ENCODE measurements at regions of chr2 and their contacts with region 1.

Region 1: DNA sequence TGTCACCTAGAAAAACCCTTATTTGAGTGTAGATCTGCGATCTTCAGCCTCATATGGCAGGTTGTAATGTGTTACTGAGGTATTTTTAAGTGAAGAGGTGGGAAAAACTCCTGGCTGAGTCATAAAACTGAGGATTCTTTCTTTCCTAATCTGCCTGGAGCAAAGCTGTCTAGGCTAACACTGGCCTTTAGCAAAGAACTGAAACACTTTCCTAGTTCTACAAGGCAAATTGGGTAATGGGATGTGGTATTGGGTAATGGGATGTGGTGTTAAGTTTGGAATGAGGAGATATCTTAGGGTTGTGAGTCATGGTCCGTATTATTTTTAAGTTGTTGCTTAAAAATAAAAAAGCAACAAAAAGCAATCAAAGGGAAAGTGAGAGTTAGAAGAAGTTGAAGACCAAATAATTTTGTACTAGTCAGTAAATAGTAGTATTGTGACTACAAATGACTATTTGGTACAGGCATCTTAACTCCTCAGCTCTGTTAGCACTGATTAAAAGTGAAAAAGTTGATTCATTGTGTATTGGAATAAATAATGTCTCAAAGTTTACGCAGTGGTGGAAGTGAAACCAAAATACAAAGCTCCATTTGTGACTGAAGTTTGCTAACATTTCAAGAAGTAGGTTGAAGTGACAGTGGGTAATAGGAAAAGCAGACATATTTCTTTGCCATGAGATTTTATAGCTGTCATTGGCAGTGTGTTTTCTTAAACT is 216.8 kb downstream of the CAMKMT start:
- DNase-seq: peak; percentile 54
- ATAC-seq: peak; percentile 95
- H3K4me3 ChIP-seq: 0 out of 2 replicates have a peak overlapping the region, but pooled peaks have one; percentile 9
- H3K27ac ChIP-seq: peak overlapping the region; percentile 63
- H3K4me1 ChIP-seq: peaks cover 11% of the 10 kb centered on the region; the same call in 1 of the 2 replicates
- H3K27me3 ChIP-seq: no peaks in the 10 kb centered on the region
- CTCF ChIP-seq: no peak
- EP300 ChIP-seq: peak; percentile 49 to 56; a peak in 1 of 4 replicates
- POLR2A ChIP-seq: no peak
- RAD21 ChIP-seq: no peak

Region 2: DNA sequence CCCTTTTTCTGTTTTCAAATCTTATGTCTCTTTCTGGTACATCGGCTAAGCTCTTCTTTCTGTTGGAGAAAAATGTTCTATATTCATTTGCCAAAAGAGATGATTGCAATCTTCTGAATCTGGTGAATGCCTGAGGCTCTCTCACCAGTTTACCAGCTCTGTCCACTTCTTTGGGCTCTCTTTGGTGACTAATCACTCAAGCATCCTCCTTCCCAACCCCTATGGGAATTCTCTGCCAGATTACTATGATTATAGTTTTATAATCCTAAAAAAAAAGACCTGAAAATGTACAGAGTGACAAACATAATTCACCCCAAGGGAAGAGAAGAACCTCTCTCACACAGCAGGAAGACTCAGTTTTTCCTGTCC is 29.5 kb before region 1 on chr2:
- CTCF ChIA-PET with region 1: interaction called, 5 read pairs
- POLR2A ChIA-PET with region 1: no interaction called
- RAD21 ChIA-PET with region 1: interaction called, 4 read pairs
- SMC1A ChIA-PET with region 1: interaction called, 11 read pairs
- in situ Hi-C with region 1: no loop called
- intact Hi-C with region 1: no loop called
- DNase-seq: no peak
- ATAC-seq: no peak
- H3K4me3 ChIP-seq: no peak overlapping the region
- H3K27ac ChIP-seq: no peak overlapping the region
- H3K4me1 ChIP-seq: peaks cover 5% of the 10 kb centered on the region
- H3K27me3 ChIP-seq: no peaks in the 10 kb centered on the region
- CTCF ChIP-seq: no peak
- EP300 ChIP-seq: no peak
- POLR2A ChIP-seq: no peak
- RAD21 ChIP-seq: no peak

Region 3: GRCh38 chr2:44602446-44602845 is 23.9 kb after region 1 on chr2:
- CTCF ChIA-PET with region 1: interaction called, 8 read pairs
- POLR2A ChIA-PET with region 1: interaction called, 7 read pairs
- RAD21 ChIA-PET with region 1: interaction called, 41 read pairs
- SMC1A ChIA-PET with region 1: interaction called, 57 read pairs
- in situ Hi-C with region 1: no loop called
- intact Hi-C with region 1: no loop called
- DNase-seq: no peak
- ATAC-seq: no peak
- H3K4me3 ChIP-seq: no peak overlapping the region
- H3K27ac ChIP-seq: no peak overlapping the region
- H3K4me1 ChIP-seq: peaks cover 3% of the 10 kb centered on the region; the same call in 1 of the 2 replicates
- H3K27me3 ChIP-seq: no peaks in the 10 kb centered on the region
- CTCF ChIP-seq: no peak
- EP300 ChIP-seq: no peak
- POLR2A ChIP-seq: no peak
- RAD21 ChIP-seq: no peak

Region 4: DNA sequence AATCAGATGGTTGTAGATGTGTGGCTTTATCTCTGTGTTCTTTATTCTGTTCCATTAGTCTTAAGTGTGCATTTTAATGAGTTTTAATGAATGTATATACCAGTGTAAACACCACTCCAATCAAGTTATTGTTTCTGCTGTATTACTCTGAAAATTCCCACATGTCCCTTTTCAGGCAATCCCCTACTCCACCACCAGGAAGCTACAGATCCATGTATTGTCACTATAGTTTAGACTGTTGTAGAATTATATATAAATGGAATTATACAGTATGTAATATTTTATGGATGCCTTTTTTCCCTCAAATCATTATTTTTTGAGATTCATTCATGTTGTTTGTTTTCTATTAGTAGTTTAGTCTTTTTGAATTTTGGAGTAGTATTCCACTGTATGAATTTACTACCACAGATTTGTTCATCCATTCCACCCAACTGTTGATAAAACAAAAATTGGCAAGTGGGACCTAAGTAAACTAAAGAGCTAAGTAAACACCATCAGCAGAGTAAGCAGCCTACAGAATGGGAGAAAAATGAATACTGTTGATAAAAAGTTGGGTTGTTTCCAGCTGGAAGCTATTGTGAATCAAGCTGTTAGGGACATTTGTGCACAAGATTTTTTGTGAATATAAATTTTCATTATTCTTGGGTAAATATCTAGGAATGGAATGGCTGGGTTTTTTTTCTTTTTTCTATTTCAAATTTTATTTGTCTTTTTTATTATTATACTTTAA is 45.2 kb after region 1 on chr2:
- CTCF ChIA-PET with region 1: interaction called, 3 read pairs
- POLR2A ChIA-PET with region 1: interaction called, 5 read pairs
- RAD21 ChIA-PET with region 1: interaction called, 7 read pairs
- SMC1A ChIA-PET with region 1: interaction called, 24 read pairs
- in situ Hi-C with region 1: no loop called
- intact Hi-C with region 1: no loop called
- DNase-seq: no peak
- ATAC-seq: no peak
- H3K4me3 ChIP-seq: no peak overlapping the region
- H3K27ac ChIP-seq: no peak overlapping the region
- H3K4me1 ChIP-seq: no peaks in the 10 kb centered on the region; the same call in 1 of the 2 replicates
- H3K27me3 ChIP-seq: no peaks in the 10 kb centered on the region
- CTCF ChIP-seq: no peak
- EP300 ChIP-seq: no peak
- POLR2A ChIP-seq: no peak
- RAD21 ChIP-seq: no peak

Region 5: GRCh38 chr2:44707945-44708660 is 129.5 kb after region 1 on chr2:
- CTCF ChIA-PET with region 1: interaction called, 4 read pairs
- POLR2A ChIA-PET with region 1: no interaction called
- RAD21 ChIA-PET with region 1: interaction called, 3 read pairs
- SMC1A ChIA-PET with region 1: interaction called, 12 read pairs
- in situ Hi-C with region 1: no loop called
- intact Hi-C with region 1: no loop called
- DNase-seq: peak; percentile 25
- ATAC-seq: peak; percentile 86
- H3K4me3 ChIP-seq: no peak overlapping the region; the same call in 1 of the 2 replicates
- H3K27ac ChIP-seq: peak overlapping the region; percentile 23; the same call in 1 of the 2 replicates
- H3K4me1 ChIP-seq: peaks cover 8% of the 10 kb centered on the region
- H3K27me3 ChIP-seq: no peaks in the 10 kb centered on the region
- CTCF ChIP-seq: no peak
- EP300 ChIP-seq: no peak
- POLR2A ChIP-seq: no peak
- RAD21 ChIP-seq: no peak

Region 6: GRCh38 chr2:44740678-44741077 is 162.1 kb after region 1 on chr2:
- CTCF ChIA-PET with region 1: no interaction called
- POLR2A ChIA-PET with region 1: no interaction called
- RAD21 ChIA-PET with region 1: no interaction called
- SMC1A ChIA-PET with region 1: no interaction called
- in situ Hi-C with region 1: no loop called
- intact Hi-C with region 1: no loop called
- DNase-seq: no peak
- ATAC-seq: no peak
- H3K4me3 ChIP-seq: no peak overlapping the region
- H3K27ac ChIP-seq: no peak overlapping the region
- H3K4me1 ChIP-seq: no peaks in the 10 kb centered on the region
- H3K27me3 ChIP-seq: no peaks in the 10 kb centered on the region
- CTCF ChIP-seq: no peak
- EP300 ChIP-seq: no peak
- POLR2A ChIP-seq: no peak
- RAD21 ChIP-seq: no peak

Region 7: GRCh38 chr2:44793322-44793870 is 214.8 kb after region 1 on chr2:
- CTCF ChIA-PET with region 1: no interaction called
- POLR2A ChIA-PET with region 1: no interaction called
- RAD21 ChIA-PET with region 1: no interaction called
- SMC1A ChIA-PET with region 1: no interaction called
- in situ Hi-C with region 1: no loop called
- intact Hi-C with region 1: no loop called
- DNase-seq: no peak
- ATAC-seq: no peak
- H3K4me3 ChIP-seq: no peak overlapping the region
- H3K27ac ChIP-seq: no peak overlapping the region
- H3K4me1 ChIP-seq: no peaks in the 10 kb centered on the region
- H3K27me3 ChIP-seq: no peaks in the 10 kb centered on the region
- CTCF ChIP-seq: no peak
- EP300 ChIP-seq: no peak
- POLR2A ChIP-seq: no peak
- RAD21 ChIP-seq: no peak